ENCODE measurements at regions of chr4 and their contacts with region 1.

Region 1: GRCh38 chr4:22607382-22607781 is 85.4 kb upstream of the GBA3 start:
- DNase-seq: peak; percentile 35
- H3K4me3 ChIP-seq: no peak overlapping the region
- H3K27ac ChIP-seq: no peak overlapping the region
- H3K4me1 ChIP-seq: no peaks in the 10 kb centered on the region
- H3K27me3 ChIP-seq: no peaks in the 10 kb centered on the region
- CTCF ChIP-seq: peak; percentile 68 to 89

Region 2: DNA sequence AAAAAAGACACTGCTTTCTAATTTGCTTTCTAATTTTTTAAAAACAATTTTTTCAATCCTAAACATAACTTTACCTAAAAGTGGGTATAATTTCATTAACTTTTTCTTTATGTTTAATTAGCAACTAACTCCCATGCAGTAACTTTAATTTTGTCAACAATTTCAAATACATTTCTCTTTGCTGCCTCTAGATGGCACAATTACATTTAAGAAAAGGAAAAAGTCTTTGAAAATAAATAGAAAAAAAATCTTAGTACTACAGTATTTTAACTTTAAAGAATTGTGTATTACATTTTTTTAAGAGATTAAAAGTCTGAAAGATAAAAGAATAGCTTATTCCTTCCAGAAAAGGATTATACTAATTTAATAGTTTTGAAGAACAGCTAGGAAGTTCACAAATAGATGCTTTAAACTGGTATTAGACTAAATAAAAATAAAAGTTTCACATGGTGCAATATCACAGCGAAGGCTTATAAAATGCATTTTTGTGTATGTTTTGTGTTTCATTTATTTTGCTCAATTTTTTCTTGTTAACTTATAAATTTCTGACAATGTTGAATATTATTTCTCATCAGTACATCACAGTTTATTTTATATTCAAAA is 196.6 kb before region 1 on chr4:
- CTCF ChIA-PET with region 1: no interaction called
- dilution Hi-C with region 1: no loop called
- in situ Hi-C with region 1: loop called in 1 of 2 experiments (anchors 10 kb)
- intact Hi-C with region 1: loop called (anchors 1 kb)
- DNase-seq: no peak
- H3K4me3 ChIP-seq: no peak overlapping the region
- H3K27ac ChIP-seq: no peak overlapping the region
- H3K4me1 ChIP-seq: no peaks in the 10 kb centered on the region
- H3K27me3 ChIP-seq: no peaks in the 10 kb centered on the region
- CTCF ChIP-seq: peak; percentile 37 to 44

Region 3: DNA sequence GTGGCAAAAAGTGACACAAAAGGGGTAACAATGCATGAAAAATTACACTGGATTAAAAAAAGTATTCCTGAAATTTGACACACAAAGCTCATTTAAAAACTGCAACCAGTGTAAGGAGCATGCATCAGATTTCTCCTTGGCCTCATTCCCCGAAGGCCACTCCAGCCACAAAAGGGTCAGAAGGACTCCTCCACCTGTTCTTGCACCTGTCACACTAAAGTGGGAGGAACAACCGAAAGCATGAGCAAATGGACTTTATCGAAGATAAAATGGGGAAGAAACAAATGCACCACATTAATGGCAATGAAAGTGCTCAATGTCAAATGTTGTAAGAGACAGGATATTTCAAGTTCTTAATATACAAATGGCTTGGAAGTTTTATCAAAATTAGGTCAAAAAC is 179.7 kb before region 1 on chr4:
- CTCF ChIA-PET with region 1: no interaction called
- dilution Hi-C with region 1: no loop called
- in situ Hi-C with region 1: loop called in 1 of 2 experiments (anchors 10 kb)
- intact Hi-C with region 1: no loop called
- DNase-seq: no peak
- H3K4me3 ChIP-seq: no peak overlapping the region
- H3K27ac ChIP-seq: no peak overlapping the region
- H3K4me1 ChIP-seq: no peaks in the 10 kb centered on the region
- H3K27me3 ChIP-seq: no peaks in the 10 kb centered on the region
- CTCF ChIP-seq: no peak

Region 4: DNA sequence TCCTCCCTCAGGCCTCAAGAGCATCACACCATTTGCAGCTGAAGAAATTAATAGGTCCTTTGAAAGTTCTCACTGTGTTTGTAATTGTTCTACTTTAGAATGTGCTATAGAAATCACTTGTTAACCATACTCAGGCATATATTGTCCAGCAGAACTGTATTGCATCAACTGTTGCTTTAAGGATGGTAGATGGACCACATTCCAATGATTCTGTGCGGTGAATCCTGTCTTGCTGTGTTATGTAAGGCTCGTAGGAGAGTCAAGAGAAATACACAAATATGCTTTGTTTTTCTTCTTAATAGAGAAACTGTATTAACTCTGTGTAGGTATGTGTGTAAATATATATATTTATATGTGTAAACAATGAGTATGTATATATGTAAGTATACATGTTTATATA is 85.2 kb before region 1 on chr4:
- CTCF ChIA-PET with region 1: no interaction called
- dilution Hi-C with region 1: loop called (anchors 5 kb)
- in situ Hi-C with region 1: no loop called
- intact Hi-C with region 1: loop called (anchors 5 kb)
- DNase-seq: no peak
- H3K4me3 ChIP-seq: no peak overlapping the region
- H3K27ac ChIP-seq: no peak overlapping the region
- H3K4me1 ChIP-seq: peaks cover 3% of the 10 kb centered on the region
- H3K27me3 ChIP-seq: no peaks in the 10 kb centered on the region
- CTCF ChIP-seq: no peak

Measured in mammary epithelial cell (primary cell).